SK-N-SH (cell line): ENCODE measurements at regions of chr17 and their contacts with region 1.

Region 1: GRCh38 chr17:81666342-81667191 is at the starts of genes CCDC137 and OXLD1:
- DNase-seq: peak; percentile 100
- H3K4me3 ChIP-seq: peak within 1 kb of the TSS; percentile 74 to 96
- H3K27ac ChIP-seq: peak within 1 kb of the TSS; percentile 71 to 80
- H3K4me1 ChIP-seq: peaks cover 18 to 22% of the 10 kb centered on the region in 2 experiments; a peak in 3 of 4 replicates
- H3K27me3 ChIP-seq: no peaks in the 10 kb centered on the region
- CTCF ChIP-seq: no peak
- EP300 ChIP-seq: no peak
- RAD21 ChIP-seq: no peak
- polyA plus RNA-seq, gene CCDC137: 55.1 and 62.4 TPM in 2 replicates
- polyA plus RNA-seq, gene OXLD1: 103 and 124 TPM in 2 replicates

Region 2: GRCh38 chr17:81676906-81677305 is 10.3 kb after region 1 on chr17:
- CTCF ChIA-PET with region 1: interaction called, 12 read pairs
- POLR2A ChIA-PET with region 1: interaction called, 6 read pairs
- DNase-seq: peak; percentile 30
- H3K4me3 ChIP-seq: no peak overlapping the region
- H3K27ac ChIP-seq: no peak overlapping the region
- H3K4me1 ChIP-seq: peaks cover 0 to 1% of the 10 kb centered on the region in 2 experiments; a peak in 2 of 4 replicates
- H3K27me3 ChIP-seq: no peaks in the 10 kb centered on the region
- CTCF ChIP-seq: no peak
- EP300 ChIP-seq: no peak
- RAD21 ChIP-seq: no peak

Region 3: GRCh38 chr17:82107341-82107860 is 440.8 kb after region 1 on chr17:
- CTCF ChIA-PET with region 1: no interaction called
- POLR2A ChIA-PET with region 1: no interaction called
- DNase-seq: peak; percentile 74
- H3K4me3 ChIP-seq: no peak overlapping the region
- H3K27ac ChIP-seq: peak overlapping the region in 1 of 2 experiments; percentile 93; a peak in 2 of 4 replicates
- H3K4me1 ChIP-seq: peaks cover 11 to 51% of the 10 kb centered on the region in 2 experiments; a peak in 3 of 4 replicates
- H3K27me3 ChIP-seq: no peaks in the 10 kb centered on the region
- CTCF ChIP-seq: peak; percentile 34; the same call in 1 of the 2 replicates
- EP300 ChIP-seq: no peak
- RAD21 ChIP-seq: peak; percentile 24; the same call in 1 of the 2 replicates